SK-N-SH (cell line): ENCODE measurements at regions of chr7 and their contacts with region 1.

Region 1: GRCh38 chr7:139230774-139231512 is at the start of gene UBN2:
- DNase-seq: peak; percentile 99
- H3K4me3 ChIP-seq: peak within 1 kb of the TSS; percentile 99 to 100
- H3K27ac ChIP-seq: peak within 1 kb of the TSS; percentile 87 to 99
- H3K4me1 ChIP-seq: peaks cover 0 to 29% of the 10 kb centered on the region in 2 experiments; a peak in 2 of 4 replicates
- H3K27me3 ChIP-seq: no peaks in the 10 kb centered on the region
- CTCF ChIP-seq: no peak
- EP300 ChIP-seq: no peak
- RAD21 ChIP-seq: no peak
- polyA plus RNA-seq, gene UBN2: 2.0 and 2.9 TPM in 2 replicates

Region 2: DNA sequence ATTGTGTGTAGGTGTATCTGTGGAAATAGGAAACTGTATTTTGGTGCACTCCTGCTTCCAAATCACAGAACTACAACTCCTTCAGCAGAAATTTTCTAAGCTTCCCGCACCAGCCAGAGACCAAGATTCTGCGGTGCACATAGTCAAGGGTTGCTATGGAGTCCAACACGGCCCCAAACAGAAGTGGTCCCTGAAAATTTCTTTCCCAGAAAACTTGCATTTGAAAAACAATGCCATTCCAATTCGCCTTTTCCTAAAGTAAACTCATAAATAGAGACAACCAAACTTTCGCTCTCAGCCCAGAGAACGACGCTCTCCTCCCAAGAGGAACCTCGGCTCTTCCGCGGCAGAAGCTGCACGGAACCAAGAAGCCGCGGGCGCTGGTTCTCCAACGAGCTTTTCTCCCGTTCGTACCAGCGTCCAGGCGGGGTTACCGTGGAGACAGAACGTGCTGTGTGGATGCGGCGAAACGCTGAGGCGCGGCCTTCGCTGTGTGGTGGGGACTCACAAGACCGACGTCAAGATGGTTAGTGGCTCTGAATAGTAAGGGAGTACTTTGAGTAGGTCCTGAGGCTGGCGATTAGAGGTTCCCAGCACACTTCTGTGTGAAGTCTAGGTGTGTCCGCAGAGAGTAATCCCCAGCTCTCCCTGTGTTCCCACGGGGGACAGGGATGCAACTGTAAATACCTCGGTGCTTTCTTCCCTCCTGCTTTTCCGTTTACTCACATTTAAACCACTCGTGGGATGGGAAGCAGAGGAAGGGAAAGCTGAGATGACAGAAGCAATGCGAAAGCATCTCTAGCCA is 97.4 kb before region 1 on chr7:
- CTCF ChIA-PET with region 1: interaction called, 3 read pairs
- POLR2A ChIA-PET with region 1: interaction called, 13 read pairs
- DNase-seq: peak; percentile 87
- H3K4me3 ChIP-seq: peak overlapping the region; percentile 76 to 94
- H3K27ac ChIP-seq: peak overlapping the region; percentile 65 to 87
- H3K4me1 ChIP-seq: peaks cover 0 to 7% of the 10 kb centered on the region in 2 experiments; a peak in 2 of 4 replicates
- H3K27me3 ChIP-seq: peaks cover 1% of the 10 kb centered on the region
- CTCF ChIP-seq: no peak
- EP300 ChIP-seq: peak in 1 of 2 experiments; percentile 50; a peak in 2 of 4 replicates
- RAD21 ChIP-seq: peak; percentile 24; the same call in 1 of the 2 replicates